ENCODE measurements at regions of chr11 and their contacts with region 1.

Region 1: GRCh38 chr11:120335908-120336640 is at the start of gene ARHGEF12:
- DNase-seq: peak; percentile 88
- H3K4me3 Mint-ChIP-seq: peak within 1 kb of the TSS; percentile 88
- H3K27ac Mint-ChIP-seq: no peak within 1 kb of the TSS
- H3K4me1 Mint-ChIP-seq: peaks cover 34% of the 10 kb centered on the region
- H3K27me3 Mint-ChIP-seq: peaks cover 37% of the 10 kb centered on the region
- total RNA-seq, gene ARHGEF12: 16.4 to 16.9 TPM

Region 2: DNA sequence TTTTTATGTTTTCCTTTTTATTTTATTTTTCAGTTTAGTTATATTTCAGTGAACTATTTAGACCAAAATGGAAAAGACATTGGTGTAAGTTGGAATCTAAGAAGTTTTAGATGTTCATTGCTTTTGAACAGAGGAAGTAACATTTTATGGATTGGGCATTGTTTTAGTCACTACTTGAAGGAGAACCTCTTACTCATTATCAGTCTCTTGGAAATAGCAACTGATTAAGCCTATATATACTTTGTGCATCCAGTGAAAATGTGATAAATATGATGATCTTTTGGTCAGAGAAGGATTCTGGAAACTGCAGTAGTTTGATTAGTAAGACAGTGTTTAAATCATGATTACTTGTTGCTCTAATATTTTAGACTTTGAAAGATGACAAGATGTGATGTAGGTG is 14.6 kb after region 1 on chr11:
- CTCF ChIA-PET with region 1: interaction called, 12 read pairs
- POLR2A ChIA-PET with region 1: no interaction called
- intact Hi-C with region 1: no loop called
- DNase-seq: no peak
- H3K4me3 Mint-ChIP-seq: no peak overlapping the region
- H3K27ac Mint-ChIP-seq: no peak overlapping the region
- H3K4me1 Mint-ChIP-seq: peaks cover 9% of the 10 kb centered on the region
- H3K27me3 Mint-ChIP-seq: peaks cover 52% of the 10 kb centered on the region

Region 3: GRCh38 chr11:120682866-120683265 is 346.8 kb after region 1 on chr11:
- CTCF ChIA-PET with region 1: interaction called, 31 read pairs
- POLR2A ChIA-PET with region 1: no interaction called
- intact Hi-C with region 1: loop called (anchors 2 kb)
- DNase-seq: no peak
- H3K4me3 Mint-ChIP-seq: no peak overlapping the region
- H3K27ac Mint-ChIP-seq: no peak overlapping the region
- H3K4me1 Mint-ChIP-seq: no peaks in the 10 kb centered on the region
- H3K27me3 Mint-ChIP-seq: peaks cover 17% of the 10 kb centered on the region

Region 4: GRCh38 chr11:120719348-120719747 is 383.3 kb after region 1 on chr11:
- CTCF ChIA-PET with region 1: no interaction called
- POLR2A ChIA-PET with region 1: no interaction called
- intact Hi-C with region 1: no loop called
- DNase-seq: no peak
- H3K4me3 Mint-ChIP-seq: no peak overlapping the region
- H3K27ac Mint-ChIP-seq: no peak overlapping the region
- H3K4me1 Mint-ChIP-seq: peaks cover 6% of the 10 kb centered on the region
- H3K27me3 Mint-ChIP-seq: peaks cover 29% of the 10 kb centered on the region

Region 5: GRCh38 chr11:120952461-120953434 is 616.7 kb after region 1 on chr11:
- CTCF ChIA-PET with region 1: interaction called, 3 read pairs
- POLR2A ChIA-PET with region 1: no interaction called
- intact Hi-C with region 1: loop called (anchors 10 kb)
- DNase-seq: peak; percentile 80
- H3K4me3 Mint-ChIP-seq: peak overlapping the region; percentile 24
- H3K27ac Mint-ChIP-seq: no peak overlapping the region
- H3K4me1 Mint-ChIP-seq: peaks cover 15% of the 10 kb centered on the region
- H3K27me3 Mint-ChIP-seq: peaks cover 24% of the 10 kb centered on the region

Measured in activated CD4-positive, alpha-beta memory T cell treated with anti-CD3 and anti-CD28 coated beads for 36 hours (primary cell).